Left cardiac atrium (tissue), 4 donors: ENCODE measurements at regions of chr7 and their contacts with region 1.

Region 1: DNA sequence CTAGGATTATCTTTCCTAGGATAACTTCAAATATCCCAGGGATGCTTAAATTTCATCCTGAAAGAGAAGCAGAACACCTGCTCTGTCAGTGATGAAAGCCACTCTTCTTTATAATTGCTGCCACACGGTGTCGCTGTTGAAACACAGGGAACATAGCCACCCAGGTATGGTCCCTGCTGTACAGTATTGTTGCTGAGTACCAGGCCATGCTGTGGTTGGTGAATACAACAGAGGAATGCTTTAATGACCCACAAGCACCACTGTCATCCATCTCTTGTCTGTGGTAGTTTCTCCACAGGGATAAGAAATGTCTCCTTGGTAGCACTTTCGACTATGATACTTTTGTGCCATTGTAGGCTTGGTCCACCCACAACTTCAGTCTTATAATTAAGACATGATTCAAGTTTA is 70.6 kb upstream of the STARD3NL start:
- DNase-seq: peak; percentile 46
- ATAC-seq: peak; percentile 47 to 74

Region 2: DNA sequence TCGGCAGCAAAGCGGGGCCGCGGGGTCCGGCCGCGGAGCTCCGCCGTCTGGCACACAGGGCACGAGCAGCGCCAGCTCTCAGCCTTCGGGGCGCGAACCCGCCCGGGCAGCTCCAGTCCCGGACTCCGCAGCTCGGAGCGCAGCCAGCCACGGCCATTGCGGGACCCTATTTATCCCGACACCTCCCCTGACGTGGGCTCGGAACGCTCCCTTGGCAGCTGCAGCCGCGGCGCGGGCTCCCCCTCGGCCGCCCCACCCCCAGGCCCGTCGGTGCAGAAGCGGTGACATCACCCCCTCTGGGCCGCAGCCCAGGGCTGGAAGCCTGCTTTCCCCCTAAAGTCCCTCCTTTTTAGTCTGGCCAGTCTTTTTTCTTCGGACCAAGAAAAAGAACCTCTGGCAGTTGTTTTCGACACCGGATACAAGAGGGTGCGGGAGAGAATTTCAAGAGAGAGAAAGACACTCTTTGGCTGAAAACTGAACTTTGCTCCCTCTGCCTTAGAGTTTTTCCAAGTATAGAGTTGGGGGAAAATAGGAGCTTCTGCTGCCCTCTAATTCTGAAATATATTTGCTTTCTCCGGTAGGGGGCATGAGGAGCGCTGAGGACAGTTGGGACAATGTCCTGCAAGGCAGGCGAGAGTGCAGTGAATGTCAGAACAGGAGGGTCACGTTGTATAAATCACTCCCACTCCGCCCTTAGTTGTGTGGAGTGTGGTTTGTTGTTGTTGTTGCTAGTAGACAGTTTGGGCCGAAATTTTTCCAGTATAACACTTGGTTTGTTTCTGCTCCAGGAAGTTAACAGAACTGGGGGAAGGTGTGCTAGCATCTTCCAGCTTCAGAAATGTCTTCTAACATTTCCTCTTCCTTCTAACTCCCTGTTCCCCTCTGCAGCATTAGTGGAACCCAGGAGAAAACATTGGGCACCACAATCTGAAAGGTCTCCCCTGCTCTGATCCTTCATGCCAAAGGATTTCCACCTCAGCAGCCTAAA is 190.5 kb before region 1 on chr7 and contains the start of gene SFRP4:
- intact Hi-C with region 1: loop called in 1 of 2 experiments (anchors 5 kb)
- DNase-seq: peak; percentile 72
- ATAC-seq: peak; percentile 65 to 80
- total RNA-seq, gene SFRP4: 3.0 to 4.8 TPM

Region 3: DNA sequence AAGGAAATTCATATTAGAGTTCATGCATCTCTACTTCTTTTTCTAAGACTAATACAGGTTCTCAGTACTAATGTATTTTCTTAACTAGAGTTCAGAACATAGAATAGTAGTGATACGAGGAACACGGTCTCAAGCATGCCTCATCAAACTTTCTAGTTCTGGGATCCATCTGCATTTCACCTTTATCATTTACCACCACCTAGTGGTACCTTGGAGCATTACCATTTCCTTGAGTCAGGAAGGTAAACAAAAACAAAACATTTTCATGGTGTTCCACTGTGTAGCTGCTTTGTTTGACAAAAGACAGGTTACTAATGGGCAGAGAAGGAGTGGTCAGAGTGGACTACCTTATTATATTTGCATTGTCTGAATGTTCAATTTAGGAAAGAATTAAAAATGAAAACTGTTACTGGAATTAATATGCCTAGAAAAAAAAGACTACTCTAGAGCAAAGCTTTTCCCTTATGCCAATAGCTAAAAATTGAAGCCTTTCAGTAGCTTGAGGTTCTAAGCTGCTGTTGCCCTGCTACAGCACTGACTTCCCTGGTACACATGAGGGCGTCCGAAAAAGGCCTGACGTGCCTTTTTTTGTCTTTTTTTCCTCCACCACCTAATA is 115.1 kb after region 1 on chr7:
- intact Hi-C with region 1: loop called (anchors 1 to 2 kb)
- DNase-seq: no peak
- ATAC-seq: peak; percentile 80 to 84

Region 4: GRCh38 chr7:38318803-38319416 is 211.4 kb after region 1 on chr7:
- intact Hi-C with region 1: loop called in 1 of 2 experiments (anchors 10 kb)
- DNase-seq: no peak
- ATAC-seq: peak; percentile 77 to 79

Region 5: GRCh38 chr7:39125846-39126245 is 1018.4 kb after region 1 on chr7:
- intact Hi-C with region 1: no loop called
- DNase-seq: no peak
- ATAC-seq: no peak